ENCODE measurements at regions of chr4 and their contacts with region 1.

Region 1: DNA sequence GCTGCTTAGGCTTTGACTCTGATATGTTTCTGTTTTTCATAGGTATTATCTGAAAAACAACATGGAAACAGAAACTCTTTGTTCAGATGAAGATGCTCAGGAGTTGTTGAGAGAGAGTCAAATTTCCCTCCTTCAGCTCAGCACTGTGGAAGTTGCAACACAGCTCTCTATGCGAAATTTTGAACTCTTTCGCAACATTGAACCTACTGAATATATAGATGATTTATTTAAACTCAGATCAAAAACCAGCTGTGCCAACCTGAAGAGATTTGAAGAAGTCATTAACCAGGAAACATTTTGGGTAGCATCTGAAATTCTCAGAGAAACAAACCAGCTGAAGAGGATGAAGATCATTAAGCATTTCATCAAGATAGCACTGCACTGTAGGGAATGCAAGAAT is 238.6 kb downstream of the RAPGEF2 start:
- DNase-seq: no peak
- ATAC-seq: no peak
- H3K4me3 ChIP-seq: no peak overlapping the region
- H3K27ac ChIP-seq: no peak overlapping the region
- H3K4me1 ChIP-seq: peaks cover 0 to 24% (median 8%) of the 10 kb centered on the region in 9 donors
- H3K27me3 ChIP-seq: no peaks in the 10 kb centered on the region
- CTCF ChIP-seq: no peak

Region 2: GRCh38 chr4:158873795-158874401 is 467.6 kb before region 1 on chr4:
- intact Hi-C with region 1: no loop called
- DNase-seq: no peak
- ATAC-seq: peak in 1 of 8 donors; percentile 7
- H3K4me3 ChIP-seq: no peak overlapping the region
- H3K27ac ChIP-seq: no peak overlapping the region
- H3K4me1 ChIP-seq: peaks cover 0 to 43% (median 15%) of the 10 kb centered on the region in 9 donors
- H3K27me3 ChIP-seq: no peaks in the 10 kb centered on the region
- CTCF ChIP-seq: no peak

Region 3: GRCh38 chr4:159212675-159213293 is 128.7 kb before region 1 on chr4:
- intact Hi-C with region 1: loop called in 1 of 10 experiments (anchors 10 kb)
- DNase-seq: peak in 1 of 2 donors; percentile 52
- ATAC-seq: peak; percentile 66 to 95 (median 88)
- H3K4me3 ChIP-seq: no peak overlapping the region
- H3K27ac ChIP-seq: peak overlapping the region in 9 of 10 donors; percentile 18 to 78 (median 60)
- H3K4me1 ChIP-seq: peaks cover 5 to 91% (median 61%) of the 10 kb centered on the region in 9 donors
- H3K27me3 ChIP-seq: no peaks in the 10 kb centered on the region
- CTCF ChIP-seq: no peak

Region 4: DNA sequence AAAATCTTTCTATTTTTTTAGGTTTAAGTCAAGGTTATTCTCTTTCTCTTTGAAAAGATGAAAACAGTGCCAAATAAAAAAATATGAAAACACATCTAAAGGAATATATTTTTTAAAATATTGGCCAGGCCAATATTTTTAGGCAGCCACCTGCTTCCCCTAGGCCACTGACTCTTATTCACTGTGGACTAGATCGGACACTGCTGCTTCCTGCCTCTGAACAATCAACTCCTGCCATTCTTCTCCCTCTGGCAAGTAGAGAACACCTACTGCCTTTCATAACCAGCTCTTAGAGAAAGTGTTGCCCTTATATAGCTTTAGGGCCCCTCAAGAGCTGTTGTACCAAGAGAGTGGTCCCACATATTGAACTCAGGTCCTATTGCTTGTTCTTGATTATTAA is 290.5 kb after region 1 on chr4:
- intact Hi-C with region 1: no loop called
- DNase-seq: no peak
- ATAC-seq: no peak
- H3K4me3 ChIP-seq: no peak overlapping the region
- H3K27ac ChIP-seq: no peak overlapping the region
- H3K4me1 ChIP-seq: no peaks in the 10 kb centered on the region
- H3K27me3 ChIP-seq: no peaks in the 10 kb centered on the region
- CTCF ChIP-seq: no peak

Measured in heart right ventricle (tissue), 16 donors.